ENCODE measurements at regions of chr1 and their contacts with region 1.

Region 1: GRCh38 chr1:156740679-156741612 is at the start of gene MRPL24:
- DNase-seq: peak; percentile 99
- H3K4me3 ChIP-seq: peak within 1 kb of the TSS; percentile 59 to 67 (median 61)
- H3K27ac ChIP-seq: peak within 1 kb of the TSS; percentile 22
- H3K4me1 ChIP-seq: peaks cover 14% of the 10 kb centered on the region
- H3K27me3 ChIP-seq: no peaks in the 10 kb centered on the region
- CTCF ChIP-seq: no peak
- POLR2A ChIP-seq: peak; percentile 69
- total RNA-seq, gene MRPL24: 63.3 and 77.7 TPM in 2 replicates

Region 2: GRCh38 chr1:156751758-156752757 is 11.1 kb after region 1 on chr1:
- CTCF ChIA-PET with region 1: interaction called, 14 read pairs
- POLR2A ChIA-PET with region 1: interaction called, 6 read pairs
- dilution Hi-C with region 1: no loop called
- intact Hi-C with region 1: loop called (anchors 1 kb)
- DNase-seq: peak; percentile 97
- H3K4me3 ChIP-seq: peak overlapping the region; percentile 30 to 94 (median 73)
- H3K27ac ChIP-seq: peak overlapping the region; percentile 60
- H3K4me1 ChIP-seq: peaks cover 42% of the 10 kb centered on the region
- H3K27me3 ChIP-seq: no peaks in the 10 kb centered on the region
- CTCF ChIP-seq: peak in 1 of 2 donors; percentile 29
- POLR2A ChIP-seq: peak; percentile 72

Region 3: DNA sequence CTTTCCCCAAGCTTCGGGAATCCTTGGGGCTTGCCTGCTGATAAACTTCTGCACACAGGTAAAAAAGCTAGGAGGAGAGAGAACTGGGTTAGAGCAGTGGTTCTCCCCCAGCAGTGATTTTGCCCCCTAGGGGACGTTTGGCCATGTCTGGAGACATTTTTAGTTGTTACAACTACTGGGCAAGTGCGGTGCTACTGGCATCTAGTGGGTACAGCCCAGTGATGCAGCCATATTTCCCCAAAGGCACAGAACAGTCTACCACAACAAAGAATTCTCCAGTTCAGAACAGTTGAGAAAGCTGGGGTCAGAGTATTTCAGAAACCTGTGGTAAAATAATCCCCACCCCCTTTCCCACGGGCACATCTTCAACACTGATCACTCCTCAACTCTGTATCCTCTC is 220.8 kb after region 1 on chr1:
- CTCF ChIA-PET with region 1: no interaction called
- POLR2A ChIA-PET with region 1: no interaction called
- dilution Hi-C with region 1: no loop called
- intact Hi-C with region 1: no loop called
- DNase-seq: no peak
- H3K4me3 ChIP-seq: no peak overlapping the region
- H3K27ac ChIP-seq: no peak overlapping the region
- H3K4me1 ChIP-seq: peaks cover 6% of the 10 kb centered on the region
- H3K27me3 ChIP-seq: no peaks in the 10 kb centered on the region
- CTCF ChIP-seq: peak; percentile 18 to 26
- POLR2A ChIP-seq: no peak

Region 4: GRCh38 chr1:157390651-157391050 is 649.7 kb after region 1 on chr1:
- CTCF ChIA-PET with region 1: no interaction called
- POLR2A ChIA-PET with region 1: no interaction called
- dilution Hi-C with region 1: no loop called
- intact Hi-C with region 1: no loop called
- DNase-seq: peak; percentile 88
- H3K4me3 ChIP-seq: peak overlapping the region in 1 of 3 experiments; percentile 38
- H3K27ac ChIP-seq: peak overlapping the region; percentile 84
- H3K4me1 ChIP-seq: peaks cover 21% of the 10 kb centered on the region
- H3K27me3 ChIP-seq: no peaks in the 10 kb centered on the region
- CTCF ChIP-seq: no peak
- POLR2A ChIP-seq: no peak